Naive thymus-derived CD4-positive, alpha-beta T cell (primary cell): ENCODE measurements at regions of chr22 and their contacts with region 1.

Region 1: GRCh38 chr22:17501679-17502285 is 61.5 kb upstream of the SLC25A18 start:
- DNase-seq: peak in 7 of 9 donors; percentile 39 to 75 (median 61)
- ATAC-seq: peak; percentile 87
- H3K4me3 ChIP-seq: no peak overlapping the region
- H3K4me3 Mint-ChIP-seq: no peak overlapping the region
- H3K27ac ChIP-seq: no peak overlapping the region
- H3K27ac Mint-ChIP-seq: no peak overlapping the region
- H3K4me1 ChIP-seq: no peaks in the 10 kb centered on the region
- H3K4me1 Mint-ChIP-seq: peaks cover 0 to 3% (median 0%) of the 10 kb centered on the region in 7 donors
- H3K27me3 ChIP-seq: no peaks in the 10 kb centered on the region
- H3K27me3 Mint-ChIP-seq: peaks cover 0 to 9% (median 5%) of the 10 kb centered on the region in 5 donors

Region 2: DNA sequence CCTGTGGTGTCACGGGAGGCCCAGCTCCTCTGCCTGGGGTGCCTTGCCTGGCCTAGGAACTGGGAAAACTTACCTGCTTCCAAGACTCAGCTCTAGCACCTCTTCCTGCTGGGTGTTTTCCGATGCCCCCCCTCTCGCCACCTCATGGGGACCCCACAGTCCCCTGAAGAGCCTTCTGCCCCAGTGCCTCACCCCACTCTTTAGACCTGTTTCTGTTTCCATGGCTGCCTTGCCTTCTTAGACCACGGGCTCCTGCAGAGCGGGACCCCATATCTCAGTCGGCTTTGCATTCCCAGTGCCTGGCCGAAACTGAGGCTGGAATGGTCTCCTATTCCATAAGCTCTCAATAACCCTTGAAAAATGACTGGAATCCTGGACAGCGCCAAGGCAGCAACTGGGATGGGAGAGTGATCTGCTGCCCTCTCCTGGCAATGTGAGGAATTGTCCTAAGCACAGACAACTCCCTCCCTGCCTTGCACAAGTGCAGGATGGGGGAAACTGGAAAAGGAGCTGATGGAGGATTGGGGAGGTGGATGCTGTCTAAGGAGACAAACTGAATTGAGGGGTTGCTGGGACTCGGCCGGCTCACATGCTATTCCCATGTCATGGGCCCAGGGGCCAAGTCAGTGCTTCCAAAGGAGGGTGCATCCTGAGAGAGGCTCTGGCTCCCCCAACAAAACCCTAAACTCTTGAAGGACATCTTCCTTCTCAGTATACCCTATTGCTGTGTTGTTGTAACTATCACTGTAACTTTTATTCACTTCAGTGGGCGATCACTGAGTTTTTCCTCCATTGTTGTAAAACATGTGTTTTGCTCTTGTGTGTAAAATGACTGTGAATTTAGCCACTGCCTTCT is 443.6 kb before region 1 on chr22:
- CTCF ChIA-PET with region 1: interaction called, 3 read pairs
- POLR2A ChIA-PET with region 1: no interaction called
- intact Hi-C with region 1: loop called in 1 of 2 experiments (anchors 1 kb)
- DNase-seq: peak in 6 of 9 donors; percentile 13 to 53 (median 41)
- ATAC-seq: peak; percentile 69
- H3K4me3 ChIP-seq: no peak overlapping the region
- H3K4me3 Mint-ChIP-seq: no peak overlapping the region
- H3K27ac ChIP-seq: no peak overlapping the region
- H3K27ac Mint-ChIP-seq: peak overlapping the region in 1 of 9 donors; percentile 50
- H3K4me1 ChIP-seq: peaks cover 0 to 4% of the 10 kb centered on the region in 2 donors
- H3K4me1 Mint-ChIP-seq: peaks cover 3 to 9% (median 6%) of the 10 kb centered on the region in 7 donors
- H3K27me3 ChIP-seq: no peaks in the 10 kb centered on the region
- H3K27me3 Mint-ChIP-seq: peaks cover 0 to 13% (median 0%) of the 10 kb centered on the region in 5 donors

Region 3: GRCh38 chr22:17158568-17159503 is 342.9 kb before region 1 on chr22 and contains the start of gene HDHD5:
- CTCF ChIA-PET with region 1: interaction called, 5 read pairs
- POLR2A ChIA-PET with region 1: interaction called, 4 read pairs
- intact Hi-C with region 1: loop called in 1 of 2 experiments (anchors 5 kb)
- DNase-seq: peak; percentile 71 to 87 (median 84)
- ATAC-seq: peak; percentile 96
- H3K4me3 ChIP-seq: peak within 1 kb of the TSS; percentile 79
- H3K4me3 Mint-ChIP-seq: peak within 1 kb of the TSS; percentile 80 to 91 (median 88)
- H3K27ac ChIP-seq: peak within 1 kb of the TSS; percentile 79
- H3K27ac Mint-ChIP-seq: peak within 1 kb of the TSS in 8 of 9 donors; percentile 36 to 88 (median 76)
- H3K4me1 ChIP-seq: peaks cover 18 to 26% of the 10 kb centered on the region in 2 donors
- H3K4me1 Mint-ChIP-seq: peaks cover 18 to 48% (median 36%) of the 10 kb centered on the region in 7 donors
- H3K27me3 ChIP-seq: no peaks in the 10 kb centered on the region
- H3K27me3 Mint-ChIP-seq: no peaks in the 10 kb centered on the region
- total RNA-seq, gene HDHD5: 18.8 to 50.9 (median 26.2) TPM

Region 4: DNA sequence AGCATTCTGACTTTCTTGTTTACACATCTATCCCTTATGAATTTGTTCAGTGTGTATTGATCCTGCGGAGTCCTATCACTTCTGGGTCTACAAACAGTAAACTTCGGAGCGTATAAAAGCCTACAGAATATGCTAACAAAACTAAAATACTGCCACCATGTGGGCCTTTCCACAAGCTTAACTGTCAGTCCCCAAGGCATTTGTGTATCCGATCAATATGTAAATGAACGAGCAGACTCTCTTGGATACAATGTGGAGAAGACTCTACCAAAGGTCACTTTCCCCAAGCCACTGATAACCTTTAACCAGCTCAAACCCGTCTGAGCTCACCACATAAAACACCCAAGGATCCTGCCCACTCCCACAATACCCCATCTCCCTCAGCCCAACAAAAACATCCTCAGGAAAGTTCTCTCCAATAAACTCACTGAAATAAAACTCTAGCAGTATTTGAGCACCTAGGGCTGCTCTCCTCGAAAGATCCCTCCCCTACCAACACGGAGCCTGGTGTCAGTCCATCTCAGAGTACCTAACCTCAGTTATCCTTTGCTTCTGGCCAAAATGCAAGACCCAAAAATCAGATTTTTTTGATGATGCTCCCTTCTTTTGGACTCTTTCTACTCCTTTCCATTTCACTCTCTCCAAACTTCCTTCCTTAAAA is 300.4 kb before region 1 on chr22:
- CTCF ChIA-PET with region 1: interaction called, 7 read pairs
- POLR2A ChIA-PET with region 1: no interaction called
- intact Hi-C with region 1: loop called in 1 of 2 experiments (anchors 1 kb)
- DNase-seq: no peak
- ATAC-seq: no peak
- H3K4me3 ChIP-seq: no peak overlapping the region
- H3K4me3 Mint-ChIP-seq: no peak overlapping the region
- H3K27ac ChIP-seq: no peak overlapping the region
- H3K27ac Mint-ChIP-seq: peak overlapping the region in 8 of 9 donors; percentile 1 to 82 (median 54)
- H3K4me1 ChIP-seq: no peaks in the 10 kb centered on the region
- H3K4me1 Mint-ChIP-seq: peaks cover 0 to 26% (median 17%) of the 10 kb centered on the region in 7 donors
- H3K27me3 ChIP-seq: no peaks in the 10 kb centered on the region
- H3K27me3 Mint-ChIP-seq: no peaks in the 10 kb centered on the region